Activated T-helper 1 cell treated with anti-CD3 and anti-CD28 coated beads, Interleukin-12 subunit alpha, Interleukin-12 subunit beta, Interleukin-2, Interleukin-4 antibody, amounts not matched to agents 30 ng/mL and 10 ng/mL and 1 ng/mL, durations not matched to agents 14 hours and 24 hours and 36 hours (primary cell): ENCODE measurements at regions of chr22 and their contacts with region 1.

Region 1: GRCh38 chr22:41857155-41857859 is 24.4 kb downstream of the SREBF2 start:
- DNase-seq: peak; percentile 71
- H3K4me3 Mint-ChIP-seq: peak overlapping the region; percentile 60
- H3K27ac Mint-ChIP-seq: peak overlapping the region; percentile 99
- H3K4me1 Mint-ChIP-seq: peaks cover 72% of the 10 kb centered on the region
- H3K27me3 Mint-ChIP-seq: no peaks in the 10 kb centered on the region

Region 2: DNA sequence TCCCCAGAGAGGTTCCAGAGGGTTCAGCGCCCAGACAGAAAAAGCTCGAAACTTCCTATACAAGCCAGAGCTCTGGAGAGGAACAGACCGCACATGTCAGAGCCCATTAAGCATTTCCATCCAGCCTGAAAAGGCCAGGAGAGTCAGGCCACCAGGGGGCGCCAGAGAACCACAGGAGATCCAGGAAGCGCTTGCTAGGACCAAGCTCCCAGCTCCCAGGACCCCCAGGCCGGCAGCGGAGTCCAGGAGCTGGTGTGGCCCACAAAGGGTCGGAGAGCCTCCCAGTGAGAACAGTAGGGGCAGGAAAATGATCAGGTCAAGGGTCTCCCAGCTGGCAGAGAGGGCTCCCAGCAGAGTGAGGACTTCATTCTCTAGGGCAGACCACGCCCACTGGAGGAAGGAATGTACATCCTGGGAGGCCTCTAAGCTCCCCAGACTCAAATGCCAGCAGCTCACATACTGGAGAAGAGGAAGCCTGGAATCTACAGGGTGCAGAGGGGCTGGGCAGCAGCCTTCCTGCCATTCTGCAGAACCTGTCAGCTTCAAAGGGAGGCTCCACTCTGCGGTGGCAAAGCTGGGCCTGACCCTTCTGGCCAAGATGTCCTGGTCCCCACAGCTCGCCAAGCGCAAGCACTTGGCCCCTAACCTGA is 160.1 kb before region 1 on chr22:
- intact Hi-C with region 1: loop called (anchors 1 kb)
- DNase-seq: peak; percentile 81
- H3K4me3 Mint-ChIP-seq: peak overlapping the region; percentile 40
- H3K27ac Mint-ChIP-seq: peak overlapping the region; percentile 84
- H3K4me1 Mint-ChIP-seq: peaks cover 13% of the 10 kb centered on the region
- H3K27me3 Mint-ChIP-seq: no peaks in the 10 kb centered on the region

Region 3: GRCh38 chr22:41780746-41781505 is 76.4 kb before region 1 on chr22:
- intact Hi-C with region 1: loop called (anchors 1 kb)
- DNase-seq: peak; percentile 90
- H3K4me3 Mint-ChIP-seq: peak overlapping the region; percentile 83
- H3K27ac Mint-ChIP-seq: peak overlapping the region; percentile 91
- H3K4me1 Mint-ChIP-seq: peaks cover 41% of the 10 kb centered on the region
- H3K27me3 Mint-ChIP-seq: peaks cover 2% of the 10 kb centered on the region

Region 4: DNA sequence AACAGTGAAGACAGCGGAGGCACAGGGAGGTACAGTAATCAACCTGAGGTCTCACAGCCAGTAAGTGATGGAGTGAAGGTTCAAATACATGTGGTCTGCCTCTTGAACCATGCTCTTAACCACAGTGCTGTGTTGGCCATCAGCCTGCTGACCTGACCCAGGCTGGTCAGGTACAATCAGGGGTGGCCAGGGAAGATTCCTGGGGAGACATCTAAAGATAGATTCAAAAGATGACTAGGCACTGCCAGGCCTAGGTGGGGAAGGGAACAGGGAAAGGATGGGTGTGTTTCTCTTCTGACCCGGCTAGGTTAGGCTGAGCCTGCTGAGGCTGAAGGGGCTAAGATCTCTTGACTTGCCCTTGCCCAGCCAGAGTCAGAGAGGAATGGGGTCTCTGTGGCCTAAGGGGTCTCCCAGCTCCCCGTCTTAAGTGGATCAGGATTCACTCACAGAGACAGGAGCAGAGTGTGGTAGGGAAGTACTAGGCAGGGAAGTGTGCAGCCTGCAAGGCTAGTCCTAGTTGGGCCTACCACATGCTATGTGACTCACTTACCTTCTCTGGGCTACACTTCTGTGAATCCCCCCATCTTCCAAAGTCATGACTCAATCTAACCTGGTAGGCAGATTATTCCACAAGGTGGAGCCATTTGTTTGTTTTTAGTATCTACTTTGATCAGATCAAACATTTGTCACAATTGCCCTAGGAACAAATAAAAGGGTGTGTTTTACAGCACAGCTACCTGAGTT is 34.8 kb before region 1 on chr22:
- intact Hi-C with region 1: loop called (anchors 1 kb)
- DNase-seq: peak; percentile 23
- H3K4me3 Mint-ChIP-seq: no peak overlapping the region
- H3K27ac Mint-ChIP-seq: peak overlapping the region; percentile 82
- H3K4me1 Mint-ChIP-seq: peaks cover 36% of the 10 kb centered on the region
- H3K27me3 Mint-ChIP-seq: no peaks in the 10 kb centered on the region

Region 5: GRCh38 chr22:41873391-41873790 is 16.1 kb after region 1 on chr22:
- intact Hi-C with region 1: loop called (anchors 1 kb)
- DNase-seq: peak; percentile 10
- H3K4me3 Mint-ChIP-seq: peak overlapping the region; percentile 76
- H3K27ac Mint-ChIP-seq: peak overlapping the region; percentile 82
- H3K4me1 Mint-ChIP-seq: peaks cover 67% of the 10 kb centered on the region
- H3K27me3 Mint-ChIP-seq: no peaks in the 10 kb centered on the region